Activated CD4-positive, alpha-beta T cell treated with anti-CD3 and anti-CD28 coated beads for 36 hours (primary cell): ENCODE measurements at regions of chr19 and their contacts with region 1.

Region 1: GRCh38 chr19:47273313-47273977 is 1.2 kb upstream of the INAFM1 start:
- DNase-seq: peak; percentile 94
- ATAC-seq: peak; percentile 77
- H3K4me3 Mint-ChIP-seq: peak overlapping the region; percentile 86
- H3K27ac Mint-ChIP-seq: peak overlapping the region; percentile 93
- H3K4me1 Mint-ChIP-seq: peaks cover 22% of the 10 kb centered on the region
- H3K27me3 Mint-ChIP-seq: no peaks in the 10 kb centered on the region

Region 2: GRCh38 chr19:46288896-46289588 is 984.4 kb before region 1 on chr19:
- CTCF ChIA-PET with region 1: no interaction called
- POLR2A ChIA-PET with region 1: no interaction called
- intact Hi-C with region 1: no loop called
- DNase-seq: no peak
- ATAC-seq: peak; percentile 33
- H3K4me3 Mint-ChIP-seq: no peak overlapping the region
- H3K27ac Mint-ChIP-seq: no peak overlapping the region
- H3K4me1 Mint-ChIP-seq: no peaks in the 10 kb centered on the region
- H3K27me3 Mint-ChIP-seq: peaks cover 3% of the 10 kb centered on the region

Region 3: DNA sequence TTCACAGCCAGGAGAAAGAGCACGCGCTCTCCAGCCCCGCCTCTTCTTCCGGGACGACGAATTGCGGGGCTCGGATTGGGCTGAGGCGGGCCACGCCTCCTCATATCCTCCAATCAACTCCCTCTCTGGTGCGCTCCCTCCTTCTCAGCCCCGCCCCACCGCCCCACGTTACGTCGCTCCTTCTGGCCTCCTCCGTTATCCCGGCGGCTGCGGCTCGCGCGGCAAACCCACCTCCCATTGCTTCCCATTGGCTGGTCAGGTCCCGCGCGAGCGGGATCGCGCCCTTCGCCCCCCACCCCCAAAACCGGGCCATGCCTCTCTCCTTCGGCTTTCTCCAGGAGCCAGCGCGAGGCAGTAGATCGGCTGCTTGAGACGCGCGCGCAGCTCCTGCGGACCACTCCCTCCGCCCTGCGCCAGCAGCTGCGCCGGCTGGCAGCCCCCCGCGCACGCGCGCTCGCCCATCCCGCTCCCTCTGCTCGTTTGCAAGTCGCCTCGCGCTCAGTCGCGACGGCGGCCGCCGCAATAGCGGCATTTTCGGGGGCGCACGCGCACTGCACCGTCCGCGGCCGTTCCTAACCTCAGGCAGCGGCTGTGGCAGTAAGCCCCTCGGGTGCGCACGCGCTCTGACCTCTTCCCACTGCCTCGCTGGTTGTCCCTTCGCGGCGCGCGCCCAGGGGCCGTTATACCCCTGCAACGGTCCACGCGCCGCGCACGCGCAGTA is 413.2 kb before region 1 on chr19:
- CTCF ChIA-PET with region 1: no interaction called
- POLR2A ChIA-PET with region 1: no interaction called
- intact Hi-C with region 1: loop called in 1 of 2 experiments (anchors 1 kb)
- DNase-seq: peak; percentile 99
- ATAC-seq: peak; percentile 82
- H3K4me3 Mint-ChIP-seq: no peak overlapping the region
- H3K27ac Mint-ChIP-seq: peak overlapping the region; percentile 78
- H3K4me1 Mint-ChIP-seq: peaks cover 25% of the 10 kb centered on the region
- H3K27me3 Mint-ChIP-seq: no peaks in the 10 kb centered on the region

Region 4: DNA sequence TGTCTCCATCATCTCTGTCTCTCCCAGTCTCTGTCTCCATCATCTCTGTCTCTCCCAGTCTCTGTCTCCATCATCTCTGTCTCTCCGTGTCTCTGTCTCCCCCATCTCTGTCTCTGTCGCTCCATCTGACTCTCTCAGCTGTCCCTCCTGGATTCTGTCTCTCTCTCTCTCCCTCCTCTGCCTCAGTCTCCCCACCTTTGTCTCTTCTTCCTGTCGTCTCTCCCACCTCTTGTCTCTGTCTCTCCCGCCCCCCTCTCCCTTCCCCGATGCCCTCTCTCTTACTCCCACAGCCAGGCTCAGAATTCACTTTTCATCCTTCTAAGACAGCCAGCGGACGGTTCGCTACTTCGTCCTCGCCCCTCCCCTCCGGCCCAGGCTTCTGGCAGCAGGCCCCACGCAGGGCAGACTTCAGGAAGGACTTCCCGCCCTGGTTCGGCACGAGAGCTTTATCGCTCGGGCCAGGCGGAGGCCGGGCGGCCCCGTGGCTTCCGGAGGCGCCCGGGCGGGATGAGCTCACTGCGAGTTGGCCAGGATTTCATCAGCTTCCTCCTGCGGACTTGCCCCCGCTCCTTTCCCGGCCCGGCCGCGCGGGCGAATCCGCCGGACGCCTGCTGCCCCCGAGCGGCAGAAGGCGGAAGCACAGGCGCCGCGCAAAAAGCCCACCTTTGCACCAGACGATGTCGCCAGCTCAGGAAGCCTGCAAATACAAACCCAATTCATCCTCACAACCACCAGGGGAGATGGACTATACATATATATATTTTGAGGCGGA is 29.5 kb before region 1 on chr19:
- CTCF ChIA-PET with region 1: interaction called, 9 read pairs
- POLR2A ChIA-PET with region 1: interaction called, 8 read pairs
- intact Hi-C with region 1: loop called in 1 of 2 experiments (anchors 1 kb)
- DNase-seq: peak; percentile 96
- ATAC-seq: peak; percentile 74
- H3K4me3 Mint-ChIP-seq: no peak overlapping the region
- H3K27ac Mint-ChIP-seq: peak overlapping the region; percentile 97
- H3K4me1 Mint-ChIP-seq: peaks cover 35% of the 10 kb centered on the region
- H3K27me3 Mint-ChIP-seq: peaks cover 2% of the 10 kb centered on the region

Region 5: DNA sequence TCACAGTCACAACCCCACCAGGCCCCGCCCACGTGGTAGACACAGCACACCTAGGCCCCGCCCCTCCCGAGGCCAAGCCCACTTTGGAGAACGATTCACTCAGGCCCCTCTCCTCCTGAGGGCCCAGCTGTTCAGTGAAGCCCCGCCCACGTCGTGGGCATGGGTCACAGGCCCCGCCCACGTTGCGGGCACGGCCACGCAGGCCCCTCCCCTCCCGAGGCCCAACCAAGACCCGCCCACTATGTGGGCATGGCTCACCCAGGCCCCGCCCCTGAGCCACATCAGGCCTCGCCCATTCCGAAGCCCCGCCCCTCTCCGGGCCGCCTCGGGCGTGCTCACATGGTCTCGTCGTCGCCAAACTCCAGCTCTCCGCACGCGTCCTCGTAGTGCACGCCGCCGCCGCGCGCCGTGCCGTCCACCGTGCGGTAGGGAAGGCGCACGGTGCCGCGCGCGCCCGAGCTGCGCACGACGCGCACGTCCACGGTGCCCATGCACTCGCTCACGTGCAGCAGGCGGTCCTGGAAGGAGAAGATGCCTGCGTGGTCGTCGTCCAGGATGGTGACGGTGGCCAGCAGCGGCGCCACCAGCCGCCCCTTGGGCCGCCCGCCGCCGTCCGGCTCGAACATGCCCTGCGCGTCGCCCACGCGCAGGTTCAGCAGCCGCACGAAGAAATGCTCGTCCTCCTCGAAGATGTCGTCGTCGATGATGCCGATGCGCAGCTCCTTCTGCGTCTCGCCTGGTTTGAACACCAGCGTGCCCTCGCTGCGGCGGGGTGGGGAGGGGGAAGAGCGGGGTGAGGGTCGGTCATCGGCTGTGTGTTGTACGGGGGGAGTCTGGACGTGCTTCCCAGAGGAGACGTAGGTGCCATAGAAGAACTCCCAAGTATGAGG is 174.3 kb after region 1 on chr19:
- CTCF ChIA-PET with region 1: no interaction called
- POLR2A ChIA-PET with region 1: no interaction called
- intact Hi-C with region 1: loop called in 1 of 2 experiments (anchors 1 kb)
- DNase-seq: peak; percentile 90
- ATAC-seq: peak; percentile 85
- H3K4me3 Mint-ChIP-seq: peak overlapping the region; percentile 1
- H3K27ac Mint-ChIP-seq: no peak overlapping the region
- H3K4me1 Mint-ChIP-seq: peaks cover 44% of the 10 kb centered on the region
- H3K27me3 Mint-ChIP-seq: peaks cover 56% of the 10 kb centered on the region

Region 6: DNA sequence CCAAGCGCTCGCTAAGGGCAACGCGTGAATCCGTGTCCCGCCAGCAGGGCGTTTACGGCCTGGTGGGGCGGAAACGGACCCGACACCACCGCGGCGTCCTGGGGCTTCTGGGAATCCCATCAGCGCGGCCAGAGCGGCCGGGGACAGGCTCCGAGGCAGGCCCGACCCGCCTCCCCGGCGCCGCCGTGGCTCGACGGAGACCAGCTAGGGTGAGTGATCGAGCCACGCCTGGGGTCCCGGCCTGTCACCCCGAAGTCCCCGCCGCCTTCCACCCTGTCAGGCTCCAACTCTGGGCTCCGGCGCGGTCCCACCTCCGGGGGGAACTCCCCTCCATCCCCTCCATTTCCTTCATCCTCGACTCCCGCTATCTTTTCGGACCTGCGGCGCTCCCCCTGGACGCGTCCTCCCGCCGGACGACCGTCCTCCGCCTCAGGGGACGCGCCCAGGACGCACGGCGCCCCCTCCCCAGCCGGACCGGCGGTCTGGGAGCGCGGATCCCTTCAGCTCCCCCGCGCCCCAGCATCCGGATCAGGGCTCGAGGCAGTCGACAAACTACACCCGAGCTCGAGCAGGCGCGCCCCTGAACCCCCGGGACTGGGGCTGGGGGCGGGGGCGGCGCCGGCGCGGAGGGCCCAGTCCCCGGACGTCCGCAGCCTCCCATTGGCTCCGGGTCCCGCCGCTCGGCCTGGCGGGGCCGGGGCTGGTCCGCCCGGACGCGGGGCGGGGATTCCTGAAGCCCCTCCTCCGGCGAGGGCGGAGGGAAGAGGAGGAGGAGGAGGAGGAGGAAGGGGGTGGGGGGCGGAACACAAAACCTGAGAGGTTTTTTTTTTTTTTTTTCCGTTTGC is 334.9 kb after region 1 on chr19:
- CTCF ChIA-PET with region 1: no interaction called
- POLR2A ChIA-PET with region 1: no interaction called
- intact Hi-C with region 1: loop called in 1 of 2 experiments (anchors 1 kb)
- DNase-seq: peak; percentile 97
- ATAC-seq: peak; percentile 93
- H3K4me3 Mint-ChIP-seq: peak overlapping the region; percentile 79
- H3K27ac Mint-ChIP-seq: peak overlapping the region; percentile 72
- H3K4me1 Mint-ChIP-seq: peaks cover 27% of the 10 kb centered on the region
- H3K27me3 Mint-ChIP-seq: no peaks in the 10 kb centered on the region

Region 7: GRCh38 chr19:49085020-49085867 is 1811.8 kb after region 1 on chr19 and contains the start of gene SNRNP70:
- CTCF ChIA-PET with region 1: no interaction called
- POLR2A ChIA-PET with region 1: no interaction called
- intact Hi-C with region 1: loop called in 1 of 2 experiments (anchors 5 kb)
- DNase-seq: peak; percentile 99
- ATAC-seq: peak; percentile 99
- H3K4me3 Mint-ChIP-seq: peak within 1 kb of the TSS; percentile 98
- H3K27ac Mint-ChIP-seq: peak within 1 kb of the TSS; percentile 96
- H3K4me1 Mint-ChIP-seq: peaks cover 31% of the 10 kb centered on the region
- H3K27me3 Mint-ChIP-seq: peaks cover 2% of the 10 kb centered on the region
- total RNA-seq, gene SNRNP70: 225 to 306 TPM